ENCODE measurements at regions of chr3 and their contacts with region 1.

Region 1: DNA sequence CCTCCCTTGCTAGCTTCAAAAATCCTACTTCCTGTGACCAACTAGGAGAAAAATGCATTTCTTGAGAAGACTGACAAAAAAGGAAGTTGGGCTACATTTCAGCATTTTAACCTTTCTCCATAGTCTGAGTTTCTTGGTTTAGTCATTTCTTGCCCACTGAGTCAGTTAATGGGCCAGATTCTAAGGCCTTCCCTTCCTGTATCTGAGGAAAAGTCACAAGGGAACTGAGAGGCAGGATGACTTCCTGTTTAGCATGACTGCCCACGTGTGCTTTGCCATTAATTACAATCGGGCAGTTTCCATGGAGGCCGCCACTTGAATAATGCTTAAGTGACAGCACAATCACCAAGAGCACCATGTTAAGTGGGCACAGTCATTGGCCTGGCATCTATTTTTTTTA is 794.4 kb upstream of the LMCD1 start:
- H3K4me3 Mint-ChIP-seq: no peak overlapping the region
- H3K27ac Mint-ChIP-seq: peak overlapping the region; percentile 85
- H3K4me1 Mint-ChIP-seq: peaks cover 52% of the 10 kb centered on the region
- H3K27me3 Mint-ChIP-seq: no peaks in the 10 kb centered on the region

Region 2: DNA sequence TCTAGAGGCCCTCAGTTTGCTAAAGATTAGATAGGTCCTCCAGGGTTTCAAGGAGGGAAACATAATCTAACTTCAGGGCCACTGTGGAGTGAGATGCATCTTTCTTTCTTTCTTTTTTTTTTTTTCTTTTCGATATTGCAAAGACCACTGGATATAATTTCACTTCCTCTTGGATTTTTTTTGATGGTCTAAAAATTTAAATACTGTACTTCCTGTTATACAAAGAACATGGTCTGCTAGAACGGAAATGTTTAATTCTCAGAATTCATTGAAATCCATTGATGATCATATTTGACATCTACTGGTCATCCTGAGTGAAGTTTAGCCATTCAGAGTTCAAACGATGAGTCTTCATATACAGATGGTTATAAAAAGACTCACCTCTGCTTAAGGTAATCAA is 14.3 kb before region 1 on chr3:
- intact Hi-C with region 1: loop called (anchors 1 kb)
- H3K4me3 Mint-ChIP-seq: no peak overlapping the region
- H3K27ac Mint-ChIP-seq: peak overlapping the region; percentile 67
- H3K4me1 Mint-ChIP-seq: peaks cover 23% of the 10 kb centered on the region
- H3K27me3 Mint-ChIP-seq: no peaks in the 10 kb centered on the region

Region 3: DNA sequence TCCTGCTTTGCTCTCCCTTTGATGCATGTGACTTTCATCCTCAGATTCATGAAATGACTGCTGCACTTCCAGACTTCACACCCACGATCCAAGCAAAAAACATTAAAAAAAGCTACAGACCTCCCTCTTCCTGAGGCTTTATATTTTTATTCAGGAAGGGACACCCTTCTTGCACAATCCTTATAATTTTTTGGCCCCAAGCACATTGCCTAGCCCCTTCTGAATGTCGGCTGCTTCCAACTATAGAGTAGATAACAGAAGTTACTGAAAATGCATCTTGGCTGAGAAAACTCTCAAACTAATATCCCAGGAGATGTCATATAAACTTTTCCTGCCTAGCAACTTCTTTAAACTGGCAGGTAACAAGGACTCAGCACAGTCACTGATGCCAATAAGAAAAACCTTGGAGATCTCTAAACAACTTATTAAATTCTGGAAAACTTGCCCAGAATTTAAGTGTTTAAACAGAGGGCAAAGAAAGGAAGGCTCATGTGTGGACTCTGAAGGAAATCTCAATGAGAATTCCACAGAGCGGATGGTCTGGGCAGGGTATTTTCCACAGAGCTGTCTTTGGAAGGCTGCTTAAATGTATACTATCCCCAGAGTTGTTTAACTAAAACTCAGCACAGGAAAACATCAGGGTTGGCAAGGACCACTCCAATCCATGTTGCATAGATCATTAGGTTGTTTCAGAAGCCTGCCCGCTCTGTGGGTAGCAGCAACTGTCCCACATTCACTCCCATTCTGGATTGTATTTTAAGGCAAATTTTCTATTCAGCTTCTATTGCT is 47.7 kb after region 1 on chr3:
- intact Hi-C with region 1: loop called (anchors 5 kb)
- H3K4me3 Mint-ChIP-seq: no peak overlapping the region
- H3K27ac Mint-ChIP-seq: no peak overlapping the region
- H3K4me1 Mint-ChIP-seq: peaks cover 15% of the 10 kb centered on the region
- H3K27me3 Mint-ChIP-seq: no peaks in the 10 kb centered on the region

Region 4: DNA sequence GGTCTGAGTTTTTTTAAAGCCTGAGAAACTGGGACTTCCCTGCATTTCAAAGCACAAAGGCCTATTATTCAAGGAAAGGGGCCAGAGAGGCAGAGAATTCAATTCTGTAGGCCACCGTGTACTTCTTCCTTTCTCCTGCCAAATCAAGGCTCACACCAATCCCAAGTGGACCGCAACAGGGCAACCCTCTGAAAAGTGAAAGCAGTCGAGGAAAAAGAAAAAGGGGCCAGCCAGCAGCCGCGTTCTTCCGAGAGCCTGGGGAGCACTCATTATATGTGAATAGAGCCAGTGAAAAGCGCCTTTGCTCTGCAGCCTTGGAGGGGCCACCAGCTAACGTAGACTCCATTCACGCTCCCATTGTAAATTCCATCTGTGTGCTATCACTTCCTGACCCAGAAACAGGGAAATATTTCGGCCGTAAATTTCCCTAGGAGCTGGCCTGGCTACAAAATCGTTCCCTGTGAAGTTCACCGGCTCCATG is 1609.7 kb after region 1 on chr3:
- intact Hi-C with region 1: no loop called
- H3K4me3 Mint-ChIP-seq: no peak overlapping the region
- H3K27ac Mint-ChIP-seq: no peak overlapping the region
- H3K4me1 Mint-ChIP-seq: no peaks in the 10 kb centered on the region
- H3K27me3 Mint-ChIP-seq: peaks cover 13% of the 10 kb centered on the region

Measured in dendritic cell treated with granulocyte-macrophage colony-stimulating factor and Interleukin-4, amounts not matched to agents 40 ng/mL and 50 ng/mL, for 4 days (primary cell).